Activated T-helper 2 cell treated with anti-CD3 and anti-CD28 coated beads, Interferon-gamma antibody, Interleukin-2, Interleukin-4, amounts not matched to agents 10 μg/mL and 5 μg/mL and 100 μg/mL, durations not matched to agents 14 hours and 24 hours and 36 hours (primary cell): ENCODE measurements at regions of chr11 and their contacts with region 1.

Region 1: DNA sequence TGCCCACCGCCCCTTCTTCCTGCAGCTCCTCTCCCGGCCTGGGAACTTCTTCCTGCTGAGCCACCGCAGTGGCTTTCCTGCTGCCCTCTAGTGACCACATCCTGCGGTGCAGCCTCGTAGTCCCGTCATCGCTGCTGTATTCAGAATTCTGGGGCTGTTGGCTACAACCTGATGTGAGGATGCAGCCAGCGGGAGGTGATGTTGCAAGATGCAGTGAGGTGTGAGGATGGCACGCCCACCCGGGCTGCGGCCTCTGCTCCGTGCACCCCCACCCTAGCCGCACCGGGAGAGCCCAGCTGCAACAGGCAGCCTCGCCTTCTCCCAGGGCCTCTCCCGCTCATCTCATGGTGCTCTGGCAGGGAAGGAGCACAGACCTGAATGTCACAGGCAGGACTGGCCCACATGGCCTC is 10.1 kb downstream of the CHST1 start:
- DNase-seq: peak; percentile 40
- H3K4me3 Mint-ChIP-seq: no peak overlapping the region
- H3K27ac Mint-ChIP-seq: no peak overlapping the region
- H3K4me1 Mint-ChIP-seq: peaks cover 6% of the 10 kb centered on the region
- H3K27me3 Mint-ChIP-seq: peaks cover 11% of the 10 kb centered on the region

Region 2: DNA sequence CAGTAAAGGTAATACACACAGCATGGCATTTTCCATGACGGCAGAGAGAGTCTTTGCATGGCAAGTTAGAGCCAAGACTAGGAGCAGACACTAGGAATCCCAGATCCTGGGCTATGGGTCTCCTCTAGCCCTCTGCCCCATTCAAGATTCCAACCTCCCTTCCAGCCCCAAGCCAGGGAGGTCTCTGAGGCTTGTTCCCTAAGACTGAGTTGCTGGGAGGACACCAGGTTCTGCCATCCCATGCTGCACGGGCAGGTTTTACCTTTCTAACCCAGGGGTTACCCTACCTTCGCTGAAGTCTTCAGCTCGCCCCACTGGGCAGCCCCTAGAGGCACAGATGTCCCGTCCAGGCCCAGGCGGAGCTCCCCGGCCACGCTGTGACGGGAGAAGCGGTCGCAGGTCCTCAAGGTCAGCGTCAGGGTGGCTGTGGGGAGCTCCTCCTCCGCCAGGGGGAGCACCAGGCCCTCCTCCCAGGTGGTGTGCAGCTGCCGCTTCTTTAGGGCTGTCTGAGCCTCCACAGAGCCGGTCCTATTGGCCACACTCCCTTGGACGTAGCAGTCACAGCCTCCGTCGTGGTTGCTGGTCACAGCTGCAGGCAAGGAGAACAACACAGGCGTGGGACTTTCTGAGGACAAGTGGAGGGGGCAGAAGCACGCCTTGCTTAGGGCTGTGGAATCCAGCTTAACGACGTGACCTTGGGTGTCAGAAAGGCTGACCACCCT is 403.1 kb before region 1 on chr11:
- intact Hi-C with region 1: no loop called
- DNase-seq: no peak
- H3K4me3 Mint-ChIP-seq: no peak overlapping the region
- H3K27ac Mint-ChIP-seq: no peak overlapping the region
- H3K4me1 Mint-ChIP-seq: peaks cover 3% of the 10 kb centered on the region
- H3K27me3 Mint-ChIP-seq: peaks cover 2% of the 10 kb centered on the region

Region 3: GRCh38 chr11:45371251-45372115 is 283.9 kb before region 1 on chr11:
- intact Hi-C with region 1: loop called (anchors 1 kb)
- DNase-seq: peak; percentile 39
- H3K4me3 Mint-ChIP-seq: no peak overlapping the region
- H3K27ac Mint-ChIP-seq: no peak overlapping the region
- H3K4me1 Mint-ChIP-seq: peaks cover 8% of the 10 kb centered on the region
- H3K27me3 Mint-ChIP-seq: peaks cover 19% of the 10 kb centered on the region

Region 4: GRCh38 chr11:45896422-45896984 is 241.2 kb after region 1 on chr11:
- intact Hi-C with region 1: no loop called
- DNase-seq: no peak
- H3K4me3 Mint-ChIP-seq: no peak overlapping the region
- H3K27ac Mint-ChIP-seq: no peak overlapping the region
- H3K4me1 Mint-ChIP-seq: no peaks in the 10 kb centered on the region
- H3K27me3 Mint-ChIP-seq: peaks cover 23% of the 10 kb centered on the region